CD14-positive monocyte (primary cell): ENCODE measurements at regions of chr7 and their contacts with region 1.

Region 1: DNA sequence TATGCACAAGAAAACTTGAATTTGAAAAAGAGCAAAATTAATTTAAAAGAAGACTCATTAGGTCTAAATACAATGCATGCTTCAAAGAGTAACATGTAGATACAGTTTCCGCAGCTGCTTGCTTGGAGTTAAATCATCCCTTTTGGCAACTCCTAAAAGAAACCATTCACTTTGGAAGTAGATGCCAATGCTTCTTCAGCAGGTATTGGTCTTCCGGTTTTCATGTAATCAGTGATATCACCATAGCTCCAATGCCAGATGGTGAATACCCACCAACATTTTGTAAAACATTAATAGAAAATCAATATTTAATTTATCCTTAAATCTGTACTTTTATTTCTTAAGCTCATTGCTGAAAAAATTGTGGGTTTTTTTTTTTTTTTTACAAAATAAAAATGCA is 381.1 kb upstream of the PHF14 start:
- DNase-seq: no peak
- H3K4me3 ChIP-seq: no peak overlapping the region
- H3K4me3 Mint-ChIP-seq: no peak overlapping the region
- H3K27ac ChIP-seq: no peak overlapping the region
- H3K27ac Mint-ChIP-seq: no peak overlapping the region
- H3K4me1 ChIP-seq: no peaks in the 10 kb centered on the region
- H3K4me1 Mint-ChIP-seq: no peaks in the 10 kb centered on the region
- H3K27me3 ChIP-seq: no peaks in the 10 kb centered on the region
- H3K27me3 Mint-ChIP-seq: peaks cover 0 to 2% (median 2%) of the 10 kb centered on the region in 3 donors
- CTCF ChIP-seq: no peak

Region 2: GRCh38 chr7:10537764-10538163 is 54.8 kb before region 1 on chr7:
- intact Hi-C with region 1: loop called in 1 of 2 experiments (anchors 10 kb)
- DNase-seq: no peak
- H3K4me3 ChIP-seq: no peak overlapping the region
- H3K4me3 Mint-ChIP-seq: no peak overlapping the region
- H3K27ac ChIP-seq: no peak overlapping the region
- H3K27ac Mint-ChIP-seq: no peak overlapping the region
- H3K4me1 ChIP-seq: peaks cover 3 to 10% of the 10 kb centered on the region in 2 donors
- H3K4me1 Mint-ChIP-seq: peaks cover 9% of the 10 kb centered on the region
- H3K27me3 ChIP-seq: no peaks in the 10 kb centered on the region
- H3K27me3 Mint-ChIP-seq: peaks cover 0 to 1% (median 0%) of the 10 kb centered on the region in 3 donors
- CTCF ChIP-seq: no peak